Head of caudate nucleus (tissue), 42 donors: ENCODE measurements at regions of chr3 and their contacts with region 1.

Region 1: GRCh38 chr3:58532794-58533220 is 4.2 kb downstream of the ACOX2 start:
- DNase-seq: peak; percentile 50 to 90 (median 78)

Region 2: DNA sequence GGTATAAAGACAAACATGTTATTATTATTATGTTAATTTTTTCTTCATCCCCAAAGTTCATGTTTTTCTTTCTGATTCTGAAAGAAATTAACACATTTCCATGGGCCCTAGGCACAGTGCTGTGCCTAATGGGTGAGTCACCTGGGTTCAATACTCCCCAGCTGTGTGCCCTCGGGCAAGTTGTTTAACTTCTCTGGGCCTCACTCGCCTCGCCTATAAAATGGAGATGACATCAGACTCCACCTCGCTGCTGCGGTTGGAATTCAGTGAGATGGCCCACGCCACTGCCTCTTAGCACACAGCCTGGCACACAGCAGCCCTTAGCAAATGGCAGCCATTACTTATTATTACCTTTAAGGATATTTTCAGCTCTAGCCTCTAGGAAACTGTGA is 344.6 kb before region 1 on chr3:
- intact Hi-C with region 1: loop called (anchors 10 kb)
- DNase-seq: no peak

Region 3: DNA sequence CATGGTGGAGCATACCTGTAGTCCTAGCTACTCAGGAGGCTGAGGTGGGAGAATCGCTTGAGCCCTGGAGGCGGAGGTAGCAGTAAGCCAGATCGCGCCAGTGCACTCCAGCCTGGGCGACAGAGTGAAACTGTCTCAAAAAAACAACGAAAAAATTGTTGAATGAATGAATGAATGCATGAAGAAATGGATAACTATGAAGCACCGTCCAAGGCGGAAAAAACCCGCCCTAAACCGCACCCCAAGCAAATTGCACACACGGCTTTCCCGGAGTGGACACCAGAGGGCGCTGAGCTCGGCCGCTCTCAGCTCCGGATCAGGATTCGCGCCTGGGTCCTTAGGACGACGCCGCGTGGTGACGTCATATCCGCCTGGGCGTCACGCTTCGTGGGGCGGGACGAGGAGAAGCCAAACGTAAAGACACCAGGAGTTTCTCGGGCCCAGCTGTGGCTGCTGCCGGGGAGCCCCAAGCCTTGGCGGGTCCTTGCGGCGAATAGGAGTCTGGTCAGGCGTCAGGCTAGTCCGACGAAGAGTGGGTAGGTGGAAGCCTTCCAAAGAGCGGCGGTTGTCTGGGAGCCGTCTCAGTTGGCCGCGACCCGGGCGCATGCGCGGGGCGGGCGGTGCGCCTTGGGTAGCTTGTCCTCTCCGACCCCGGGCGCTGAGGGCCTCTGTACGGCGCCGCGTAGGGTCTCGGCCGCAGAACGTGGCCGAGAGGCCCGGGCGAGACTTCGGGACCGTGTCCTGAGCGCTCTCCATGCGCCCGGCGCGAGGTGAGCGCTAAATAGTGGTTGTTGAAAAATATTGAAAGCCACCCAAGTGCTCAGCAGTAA is 226.7 kb before region 1 on chr3 and contains the starts of genes HTD2 and RPP14:
- intact Hi-C with region 1: loop called (anchors 5 kb)
- DNase-seq: peak; percentile 93 to 100 (median 98)

Region 4: GRCh38 chr3:58324391-58325390 is 208.1 kb before region 1 on chr3:
- intact Hi-C with region 1: loop called (anchors 5 kb)
- DNase-seq: no peak

Region 5: GRCh38 chr3:58491506-58492402 is 41.1 kb before region 1 on chr3 and contains the start of gene KCTD6:
- intact Hi-C with region 1: loop called (anchors 5 kb)
- DNase-seq: peak; percentile 67 to 95 (median 90)